Activated T-helper 2 cell treated with anti-CD3 and anti-CD28 coated beads, Interferon-gamma antibody, Interleukin-2, Interleukin-4, amounts not matched to agents 10 μg/mL and 5 μg/mL and 100 μg/mL, durations not matched to agents 14 hours and 24 hours and 36 hours (primary cell): ENCODE measurements at regions of chr14 and their contacts with region 1.

Region 1: GRCh38 chr14:68232300-68233055 is 412.9 kb downstream of the RAD51B start:
- DNase-seq: peak; percentile 20
- H3K4me3 Mint-ChIP-seq: no peak overlapping the region
- H3K27ac Mint-ChIP-seq: no peak overlapping the region
- H3K4me1 Mint-ChIP-seq: peaks cover 15% of the 10 kb centered on the region
- H3K27me3 Mint-ChIP-seq: no peaks in the 10 kb centered on the region

Region 2: DNA sequence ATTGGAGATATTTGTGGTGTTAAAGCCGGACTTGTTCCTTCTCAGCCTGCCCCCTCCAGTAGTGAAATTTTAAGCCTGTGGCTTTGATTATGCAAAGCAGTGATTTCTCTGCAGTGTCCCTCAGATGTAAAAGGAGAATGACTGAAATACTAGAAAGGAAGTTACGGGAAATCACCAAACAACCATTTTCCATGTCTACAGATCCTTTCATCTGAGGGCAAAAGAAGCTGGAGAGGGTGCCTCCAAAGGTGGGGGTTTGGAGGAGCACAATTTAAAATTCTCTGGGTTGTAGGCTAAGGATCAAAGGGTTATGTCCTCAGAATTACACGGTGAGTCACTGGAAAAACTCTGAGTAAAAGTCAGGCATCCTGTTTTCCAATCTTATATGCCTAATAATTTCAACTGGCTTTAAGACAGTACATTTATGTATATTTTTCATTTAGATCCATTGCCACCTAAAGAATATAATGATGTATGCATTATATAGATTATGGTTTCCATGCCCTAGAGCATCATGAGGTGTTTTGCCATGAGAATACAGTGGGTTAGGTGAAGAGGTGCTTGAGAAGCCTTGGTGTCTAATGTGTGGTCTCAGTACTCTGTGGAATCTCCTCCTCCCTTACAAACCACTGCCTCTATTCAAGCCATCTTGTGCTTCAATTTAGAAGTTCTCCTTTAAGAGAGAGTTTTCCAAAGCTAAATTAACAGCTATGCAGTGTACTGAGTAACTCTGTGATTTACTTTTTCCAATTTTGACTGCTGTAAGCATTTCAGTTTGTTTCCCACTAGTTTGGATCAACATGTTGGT is 50.8 kb before region 1 on chr14:
- intact Hi-C with region 1: loop called (anchors 1 kb)
- DNase-seq: no peak
- H3K4me3 Mint-ChIP-seq: no peak overlapping the region
- H3K27ac Mint-ChIP-seq: peak overlapping the region; percentile 50
- H3K4me1 Mint-ChIP-seq: peaks cover 45% of the 10 kb centered on the region
- H3K27me3 Mint-ChIP-seq: no peaks in the 10 kb centered on the region

Region 3: DNA sequence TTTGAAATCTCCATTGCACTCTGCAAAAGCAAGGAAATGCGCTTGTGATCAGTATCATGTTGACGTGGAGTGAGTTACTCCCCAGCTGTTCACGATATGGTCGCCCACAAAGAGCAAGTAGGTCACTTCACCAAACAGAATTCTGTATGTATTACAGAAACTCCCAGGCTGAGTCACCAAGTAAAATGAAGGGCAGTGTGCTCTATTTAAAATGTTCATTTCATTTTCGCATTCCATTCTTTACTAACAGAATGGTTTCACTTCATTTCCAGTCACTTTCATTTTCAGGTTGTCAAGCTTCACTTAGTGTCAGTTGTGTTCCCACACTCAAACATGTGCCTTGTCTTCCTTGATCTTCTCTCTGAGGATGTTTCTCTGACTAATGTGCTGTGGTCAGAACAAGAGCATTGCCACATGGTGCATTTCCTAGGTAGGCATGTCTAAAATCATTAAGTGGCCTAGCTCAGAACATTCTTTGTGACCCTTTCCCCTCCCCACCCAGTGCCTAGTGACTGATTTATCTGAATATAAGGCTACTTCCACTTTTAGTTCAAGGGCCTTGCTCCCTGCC is 21.7 kb before region 1 on chr14:
- intact Hi-C with region 1: loop called (anchors 1 kb)
- DNase-seq: peak; percentile 54
- H3K4me3 Mint-ChIP-seq: peak overlapping the region; percentile 61
- H3K27ac Mint-ChIP-seq: peak overlapping the region; percentile 62
- H3K4me1 Mint-ChIP-seq: peaks cover 36% of the 10 kb centered on the region
- H3K27me3 Mint-ChIP-seq: no peaks in the 10 kb centered on the region

Region 4: DNA sequence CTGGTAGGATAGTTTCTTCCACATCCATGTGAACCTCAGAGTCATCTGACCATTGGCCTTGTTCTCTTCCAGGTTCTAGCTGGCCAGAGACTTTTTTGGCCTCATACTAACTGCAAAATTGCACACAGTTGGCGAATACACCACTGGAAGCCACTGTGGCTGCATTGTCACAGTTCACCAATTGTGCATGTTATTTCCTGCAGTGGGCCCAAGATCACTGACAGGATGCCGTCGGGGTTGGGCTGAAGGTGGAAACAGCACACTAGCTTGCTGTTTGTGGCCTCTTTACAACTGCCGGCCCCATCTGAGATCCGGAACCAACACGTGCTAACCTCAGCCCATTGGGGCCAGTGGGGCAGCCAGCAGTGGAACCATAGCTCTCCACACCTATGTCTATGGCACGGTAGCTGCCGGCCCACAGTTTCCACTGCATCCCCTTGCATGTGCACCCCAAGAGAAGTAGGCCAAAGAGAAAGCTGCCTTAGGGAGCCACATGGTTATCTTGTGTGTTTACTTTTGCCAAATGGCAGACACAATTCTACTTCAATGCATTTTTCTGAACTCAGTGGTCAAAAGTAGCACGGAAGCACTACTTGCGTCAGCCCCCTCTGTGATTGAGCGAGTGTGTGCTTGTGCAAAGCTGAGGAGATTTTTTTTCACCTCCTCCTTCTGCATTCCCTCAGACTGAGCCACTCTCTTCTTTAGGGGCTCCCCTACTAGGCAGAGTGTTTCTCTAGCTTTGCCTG is 51.1 kb after region 1 on chr14:
- intact Hi-C with region 1: loop called (anchors 5 kb)
- DNase-seq: peak; percentile 33
- H3K4me3 Mint-ChIP-seq: no peak overlapping the region
- H3K27ac Mint-ChIP-seq: peak overlapping the region; percentile 59
- H3K4me1 Mint-ChIP-seq: peaks cover 55% of the 10 kb centered on the region
- H3K27me3 Mint-ChIP-seq: no peaks in the 10 kb centered on the region

Region 5: GRCh38 chr14:68359837-68360552 is 127.5 kb after region 1 on chr14:
- intact Hi-C with region 1: no loop called
- DNase-seq: no peak
- H3K4me3 Mint-ChIP-seq: no peak overlapping the region
- H3K27ac Mint-ChIP-seq: no peak overlapping the region
- H3K4me1 Mint-ChIP-seq: no peaks in the 10 kb centered on the region
- H3K27me3 Mint-ChIP-seq: no peaks in the 10 kb centered on the region

Region 6: GRCh38 chr14:68734231-68734775 is 501.8 kb after region 1 on chr14:
- intact Hi-C with region 1: loop called (anchors 5 kb)
- DNase-seq: no peak
- H3K4me3 Mint-ChIP-seq: peak overlapping the region; percentile 9
- H3K27ac Mint-ChIP-seq: peak overlapping the region; percentile 63
- H3K4me1 Mint-ChIP-seq: peaks cover 53% of the 10 kb centered on the region
- H3K27me3 Mint-ChIP-seq: no peaks in the 10 kb centered on the region

Region 7: DNA sequence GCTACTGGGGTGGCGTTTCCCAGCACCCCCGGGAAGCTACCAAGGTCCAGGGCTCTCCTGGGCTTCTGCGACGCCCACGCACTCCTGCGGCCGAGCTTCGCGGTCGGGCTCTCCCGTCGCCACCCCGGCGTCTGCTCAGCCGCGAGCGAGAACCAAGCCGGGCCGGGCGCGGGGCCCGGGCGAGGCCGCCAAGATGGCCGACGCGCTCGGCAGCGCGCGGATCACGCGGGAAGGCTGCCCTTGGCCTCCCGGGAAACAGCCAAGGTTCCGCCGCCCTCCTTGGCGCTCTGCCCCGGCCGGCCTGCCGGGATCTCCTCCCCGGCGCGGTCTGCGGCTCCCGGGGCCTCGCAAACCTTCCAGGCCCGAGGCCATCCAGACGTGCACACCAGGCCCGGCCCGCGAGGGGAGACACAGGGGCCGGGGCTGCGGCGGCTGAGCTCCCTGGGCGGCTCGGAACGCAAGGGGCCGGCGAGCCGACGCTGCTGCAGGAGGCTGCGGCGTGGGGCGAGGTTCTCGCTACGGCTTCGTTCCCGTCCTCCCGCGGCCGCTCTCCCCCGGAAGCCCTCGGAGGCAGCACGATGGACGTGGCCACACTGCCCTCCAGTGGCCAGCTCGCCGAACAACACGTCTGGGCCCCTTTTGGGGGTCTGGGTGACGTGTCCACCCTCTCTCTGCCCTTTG is 583.9 kb after region 1 on chr14:
- intact Hi-C with region 1: loop called (anchors 5 kb)
- DNase-seq: peak; percentile 83
- H3K4me3 Mint-ChIP-seq: peak overlapping the region; percentile 79
- H3K27ac Mint-ChIP-seq: peak overlapping the region; percentile 92
- H3K4me1 Mint-ChIP-seq: peaks cover 51% of the 10 kb centered on the region
- H3K27me3 Mint-ChIP-seq: no peaks in the 10 kb centered on the region

Region 8: GRCh38 chr14:68896132-68896531 is 663.7 kb after region 1 on chr14:
- intact Hi-C with region 1: no loop called
- DNase-seq: no peak
- H3K4me3 Mint-ChIP-seq: no peak overlapping the region
- H3K27ac Mint-ChIP-seq: no peak overlapping the region
- H3K4me1 Mint-ChIP-seq: peaks cover 26% of the 10 kb centered on the region
- H3K27me3 Mint-ChIP-seq: no peaks in the 10 kb centered on the region